ENCODE measurements at regions of chr9 and their contacts with region 1.

Region 1: GRCh38 chr9:129550199-129550839 is 70.6 kb downstream of the C9orf50 start:
- DNase-seq: peak; percentile 86 to 91 (median 90)
- ATAC-seq: peak; percentile 83 to 94 (median 88)
- H3K4me3 ChIP-seq: peak overlapping the region; percentile 34 to 50 (median 44)
- H3K27ac ChIP-seq: peak overlapping the region; percentile 40 to 79 (median 75)
- H3K4me1 ChIP-seq: peaks cover 0 to 15% (median 4%) of the 10 kb centered on the region in 4 donors
- H3K27me3 ChIP-seq: no peaks in the 10 kb centered on the region
- CTCF ChIP-seq: no peak
- POLR2A ChIP-seq: peak; percentile 50

Region 2: DNA sequence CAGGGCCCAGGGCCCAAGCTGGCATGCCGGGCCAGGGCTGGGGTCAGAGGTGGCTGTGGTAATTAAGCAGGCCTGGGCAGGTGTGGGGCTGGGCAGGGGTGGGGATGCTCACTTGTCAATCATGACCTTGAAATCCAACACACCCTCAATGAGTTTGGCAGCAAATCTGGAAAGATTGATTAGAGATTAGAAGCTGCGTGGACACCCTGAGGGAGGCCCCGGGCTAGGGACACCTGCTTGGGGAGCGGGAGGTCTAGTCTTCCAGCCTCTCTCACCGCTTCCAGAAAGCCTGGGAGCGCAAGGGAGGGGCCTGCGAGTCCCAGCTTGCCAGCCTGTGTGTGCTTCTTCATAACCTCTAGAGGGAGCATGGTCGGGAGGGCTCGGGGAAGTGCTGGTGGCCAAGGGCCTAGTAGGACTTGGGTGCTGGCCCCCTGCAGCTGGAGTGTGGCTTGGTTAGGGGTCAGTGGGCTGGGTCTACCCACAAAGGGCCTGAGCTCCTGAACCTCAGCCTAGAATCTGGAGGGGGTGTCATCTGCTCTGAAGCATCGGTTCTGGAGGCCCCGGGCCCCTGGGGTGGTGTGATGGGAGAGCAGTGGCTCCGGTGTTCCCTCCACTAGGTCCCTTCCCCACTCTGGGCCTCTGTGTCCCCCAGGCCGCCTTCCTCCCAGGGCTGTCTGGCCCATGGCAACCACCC is 447.3 kb before region 1 on chr9:
- intact Hi-C with region 1: no loop called
- DNase-seq: no peak
- ATAC-seq: peak; percentile 54 to 70 (median 58)
- H3K4me3 ChIP-seq: no peak overlapping the region
- H3K27ac ChIP-seq: no peak overlapping the region
- H3K4me1 ChIP-seq: no peaks in the 10 kb centered on the region
- H3K27me3 ChIP-seq: no peaks in the 10 kb centered on the region
- CTCF ChIP-seq: peak; percentile 10 to 45 (median 38)
- POLR2A ChIP-seq: no peak

Region 3: DNA sequence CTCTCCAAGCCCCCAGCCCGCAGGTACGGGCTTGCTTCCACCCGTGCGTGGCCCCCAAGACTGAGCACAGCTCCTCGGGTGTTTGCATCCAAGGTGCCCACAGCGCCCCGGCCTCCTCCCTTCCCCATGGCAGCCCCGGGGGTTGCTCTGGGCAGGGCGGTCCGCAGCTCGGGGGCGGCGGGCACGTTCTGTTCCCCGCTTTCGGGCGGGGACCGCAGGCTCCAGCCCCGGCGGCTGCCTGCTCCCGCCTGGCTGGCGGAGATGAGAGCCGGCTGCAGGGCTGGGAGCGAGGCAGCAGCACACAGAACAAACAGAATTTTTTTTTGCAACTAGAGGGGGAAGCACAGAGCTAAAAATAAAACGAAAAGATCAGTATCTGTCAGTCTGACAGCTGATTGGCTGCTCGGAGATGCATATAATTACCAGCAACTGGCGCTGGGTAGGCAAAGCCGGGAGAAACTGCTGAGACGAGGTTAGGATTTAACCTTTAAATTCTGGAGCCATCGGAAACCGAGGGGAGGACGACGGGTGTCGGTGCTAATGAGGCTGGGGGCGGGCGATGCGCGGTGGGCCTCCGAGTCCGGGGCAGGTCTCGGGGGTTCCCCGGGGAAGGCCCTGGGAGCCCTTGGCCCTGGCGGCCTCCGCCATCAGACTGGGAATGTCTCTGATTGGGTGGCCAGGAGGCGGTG is 229.6 kb before region 1 on chr9:
- intact Hi-C with region 1: loop called in 1 of 2 experiments (anchors 10 kb)
- DNase-seq: peak in 2 of 3 donors; percentile 62 to 73
- ATAC-seq: peak; percentile 59 to 66 (median 64)
- H3K4me3 ChIP-seq: peak overlapping the region; percentile 26 to 35 (median 33)
- H3K27ac ChIP-seq: peak overlapping the region; percentile 72 to 89 (median 73)
- H3K4me1 ChIP-seq: peaks cover 4 to 62% (median 23%) of the 10 kb centered on the region in 4 donors
- H3K27me3 ChIP-seq: no peaks in the 10 kb centered on the region
- CTCF ChIP-seq: peak in 2 of 4 donors; percentile 12 to 18
- POLR2A ChIP-seq: peak; percentile 75

Region 4: DNA sequence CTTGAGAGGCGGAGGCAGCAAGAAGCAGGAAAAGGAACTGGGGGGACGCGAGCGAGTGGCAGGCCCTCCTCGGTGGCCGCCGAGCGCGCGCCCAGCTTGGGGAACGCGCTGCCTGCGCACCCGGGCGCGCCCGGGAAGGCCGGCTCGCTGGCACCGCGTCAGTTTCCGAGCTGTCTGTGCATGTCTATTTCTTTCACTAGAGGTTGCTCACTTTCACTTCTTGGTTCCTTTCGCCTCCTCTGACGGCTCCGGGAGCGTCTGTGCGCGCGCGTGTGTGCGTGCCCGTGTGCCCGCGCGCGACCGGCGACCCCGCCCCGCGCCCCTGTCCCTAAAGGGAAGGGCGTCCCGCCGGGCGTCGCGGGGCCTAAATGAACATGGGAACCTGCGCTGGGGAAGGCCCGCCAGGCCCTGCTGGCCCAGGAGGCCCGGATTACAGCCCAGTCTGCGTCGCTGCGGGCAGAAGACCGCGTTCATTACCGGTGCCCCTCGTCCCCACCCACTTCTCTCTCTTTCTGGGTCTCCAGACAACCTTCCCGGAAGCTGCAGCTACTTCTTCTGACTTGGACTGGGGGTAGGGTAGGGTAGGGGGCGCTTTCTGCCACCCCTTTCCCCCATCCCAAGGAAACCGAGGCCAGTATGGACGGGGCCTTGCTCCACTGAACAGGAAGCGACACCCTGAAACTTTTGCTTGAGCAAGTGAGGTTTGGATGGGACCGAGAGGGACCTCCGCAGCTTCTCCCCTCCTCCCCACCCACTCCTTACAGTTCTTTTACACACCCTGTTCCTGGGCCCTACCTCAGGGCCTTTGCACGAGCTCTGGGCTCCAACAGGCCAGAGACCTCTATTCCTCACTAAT is 166.5 kb before region 1 on chr9:
- intact Hi-C with region 1: no loop called
- DNase-seq: peak; percentile 84 to 85 (median 84)
- ATAC-seq: peak; percentile 75 to 89 (median 83)
- H3K4me3 ChIP-seq: peak overlapping the region; percentile 51 to 65 (median 62)
- H3K27ac ChIP-seq: peak overlapping the region; percentile 87 to 96 (median 90)
- H3K4me1 ChIP-seq: peaks cover 0 to 10% (median 6%) of the 10 kb centered on the region in 4 donors
- H3K27me3 ChIP-seq: no peaks in the 10 kb centered on the region
- CTCF ChIP-seq: peak in 3 of 4 donors; percentile 13 to 15 (median 13)
- POLR2A ChIP-seq: peak; percentile 71

Region 5: GRCh38 chr9:129500161-129500862 is 50.0 kb before region 1 on chr9:
- intact Hi-C with region 1: loop called (anchors 5 to 10 kb)
- DNase-seq: no peak
- ATAC-seq: no peak
- H3K4me3 ChIP-seq: no peak overlapping the region
- H3K27ac ChIP-seq: no peak overlapping the region
- H3K4me1 ChIP-seq: peaks cover 0 to 15% (median 4%) of the 10 kb centered on the region in 4 donors
- H3K27me3 ChIP-seq: no peaks in the 10 kb centered on the region
- CTCF ChIP-seq: no peak
- POLR2A ChIP-seq: no peak